Cardiac septum (tissue), 1 donor: ENCODE measurements at regions of chr16 and their contacts with region 1.

Region 1: DNA sequence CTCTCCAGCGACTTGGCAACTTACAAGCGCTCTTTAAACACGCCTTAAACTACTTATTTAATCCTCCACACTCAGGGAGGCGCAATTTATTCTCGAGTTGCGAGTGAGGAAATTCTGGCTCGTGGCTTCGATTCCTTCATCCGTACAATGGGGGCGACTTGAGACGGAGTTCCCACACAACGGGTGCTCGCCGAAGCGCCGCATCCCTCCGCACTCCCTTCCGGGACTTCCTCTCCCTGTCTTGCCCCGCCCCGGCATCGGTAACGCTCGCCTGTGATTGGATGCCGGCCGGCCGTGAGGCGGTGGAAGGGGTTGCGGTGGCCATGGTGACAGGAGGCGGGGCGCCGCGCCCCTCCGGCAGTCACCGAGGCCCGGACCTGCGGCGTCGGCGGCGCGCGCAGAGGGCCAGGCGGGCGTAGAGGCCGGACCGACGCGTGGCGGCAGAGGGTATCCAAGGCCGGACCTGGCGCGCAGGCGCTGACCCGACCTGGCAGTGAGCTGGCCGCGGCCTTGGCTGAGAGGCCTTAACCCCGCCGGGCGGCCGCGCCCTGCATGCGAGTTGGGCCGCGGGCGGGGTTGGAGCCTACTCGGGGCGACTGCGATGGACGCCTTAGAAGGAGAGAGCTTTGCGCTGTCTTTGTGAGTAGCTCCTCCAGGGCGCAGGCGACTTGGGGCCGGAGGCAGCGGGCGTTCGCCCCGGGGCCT is at the start of gene ARL2BP:
- DNase-seq: peak; percentile 99
- total RNA-seq, gene ARL2BP: 41.5 TPM

Region 2: GRCh38 chr16:57185944-57186871 is 58.7 kb before region 1 on chr16 and contains the starts of genes PSME3IP1 and RSPRY1:
- intact Hi-C with region 1: loop called (anchors 5 kb)
- DNase-seq: peak; percentile 100
- total RNA-seq, gene PSME3IP1: 58.1 TPM
- total RNA-seq, gene RSPRY1: 17.1 TPM